Activated CD8-positive, alpha-beta T cell treated with anti-CD3 and anti-CD28 coated beads for 36 hours (primary cell): ENCODE measurements at regions of chr6 and their contacts with region 1.

Region 1: GRCh38 chr6:139364302-139364981 is 10.0 kb downstream of the CITED2 start:
- DNase-seq: no peak
- ATAC-seq: peak; percentile 65
- H3K4me3 Mint-ChIP-seq: no peak overlapping the region
- H3K27ac Mint-ChIP-seq: peak overlapping the region; percentile 48
- H3K4me1 Mint-ChIP-seq: peaks cover 26% of the 10 kb centered on the region
- H3K27me3 Mint-ChIP-seq: no peaks in the 10 kb centered on the region
- CTCF ChIP-seq: peak; percentile 79

Region 2: DNA sequence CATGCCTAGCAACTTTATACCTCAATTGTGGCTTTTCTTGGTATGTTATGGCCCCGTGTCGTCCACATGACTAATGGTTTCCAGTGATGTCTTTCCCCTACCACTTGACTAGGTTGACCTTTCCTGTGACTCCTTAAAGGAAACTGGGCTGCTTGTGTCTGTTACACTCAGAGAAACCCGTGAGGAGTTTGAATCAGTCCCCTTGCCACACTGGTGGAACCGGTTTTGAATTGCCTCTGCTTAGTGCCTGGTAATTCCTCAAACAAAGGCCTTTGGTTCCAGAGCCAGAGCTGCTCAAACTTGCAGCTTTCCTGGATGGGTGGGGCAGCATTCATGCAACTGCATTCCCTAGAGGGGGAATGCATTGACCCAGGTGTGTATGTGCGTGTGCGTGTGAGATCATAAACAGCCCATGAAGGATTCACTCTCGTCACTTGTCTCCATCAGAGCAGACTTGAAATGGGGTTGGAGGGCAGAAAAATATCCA is 546.6 kb before region 1 on chr6:
- CTCF ChIA-PET with region 1: interaction called, 21 read pairs
- POLR2A ChIA-PET with region 1: no interaction called
- intact Hi-C with region 1: loop called (anchors 1 kb)
- DNase-seq: peak; percentile 64
- ATAC-seq: peak; percentile 86
- H3K4me3 Mint-ChIP-seq: peak overlapping the region; percentile 20
- H3K27ac Mint-ChIP-seq: peak overlapping the region; percentile 83
- H3K4me1 Mint-ChIP-seq: peaks cover 29% of the 10 kb centered on the region
- H3K27me3 Mint-ChIP-seq: peaks cover 1% of the 10 kb centered on the region
- CTCF ChIP-seq: no peak

Region 3: GRCh38 chr6:139124887-139125672 is 239.4 kb before region 1 on chr6:
- CTCF ChIA-PET with region 1: interaction called, 26 read pairs
- POLR2A ChIA-PET with region 1: no interaction called
- intact Hi-C with region 1: loop called (anchors 1 kb)
- DNase-seq: peak; percentile 91
- ATAC-seq: peak; percentile 96
- H3K4me3 Mint-ChIP-seq: peak overlapping the region; percentile 53
- H3K27ac Mint-ChIP-seq: peak overlapping the region; percentile 96
- H3K4me1 Mint-ChIP-seq: peaks cover 49% of the 10 kb centered on the region
- H3K27me3 Mint-ChIP-seq: no peaks in the 10 kb centered on the region
- CTCF ChIP-seq: peak; percentile 66

Region 4: GRCh38 chr6:139134817-139135581 is 229.4 kb before region 1 on chr6 and contains the start of gene HECA:
- CTCF ChIA-PET with region 1: interaction called, 10 read pairs
- POLR2A ChIA-PET with region 1: no interaction called
- intact Hi-C with region 1: no loop called
- DNase-seq: peak; percentile 99
- ATAC-seq: peak; percentile 77
- H3K4me3 Mint-ChIP-seq: peak within 1 kb of the TSS; percentile 92
- H3K27ac Mint-ChIP-seq: peak within 1 kb of the TSS; percentile 92
- H3K4me1 Mint-ChIP-seq: peaks cover 59% of the 10 kb centered on the region
- H3K27me3 Mint-ChIP-seq: no peaks in the 10 kb centered on the region
- CTCF ChIP-seq: no peak
- total RNA-seq, gene HECA: 45.4 to 47.1 TPM

Region 5: GRCh38 chr6:139250296-139251044 is 114.0 kb before region 1 on chr6:
- CTCF ChIA-PET with region 1: interaction called, 12 read pairs
- POLR2A ChIA-PET with region 1: no interaction called
- intact Hi-C with region 1: no loop called
- DNase-seq: peak; percentile 69
- ATAC-seq: peak; percentile 96
- H3K4me3 Mint-ChIP-seq: no peak overlapping the region
- H3K27ac Mint-ChIP-seq: peak overlapping the region; percentile 77
- H3K4me1 Mint-ChIP-seq: peaks cover 48% of the 10 kb centered on the region
- H3K27me3 Mint-ChIP-seq: no peaks in the 10 kb centered on the region
- CTCF ChIP-seq: peak; percentile 71

Region 6: GRCh38 chr6:139291813-139292619 is 72.4 kb before region 1 on chr6 and contains the start of gene TXLNB:
- CTCF ChIA-PET with region 1: interaction called, 14 read pairs
- POLR2A ChIA-PET with region 1: no interaction called
- intact Hi-C with region 1: loop called (anchors 5 kb)
- DNase-seq: peak; percentile 92
- ATAC-seq: peak; percentile 92
- H3K4me3 Mint-ChIP-seq: peak within 1 kb of the TSS; percentile 76
- H3K27ac Mint-ChIP-seq: peak within 1 kb of the TSS; percentile 96
- H3K4me1 Mint-ChIP-seq: peaks cover 55% of the 10 kb centered on the region
- H3K27me3 Mint-ChIP-seq: no peaks in the 10 kb centered on the region
- CTCF ChIP-seq: no peak
- total RNA-seq, gene TXLNB: 0.11 to 0.22 TPM

Region 7: GRCh38 chr6:139330826-139331565 is 33.4 kb before region 1 on chr6:
- CTCF ChIA-PET with region 1: interaction called, 10 read pairs
- POLR2A ChIA-PET with region 1: no interaction called
- intact Hi-C with region 1: no loop called
- DNase-seq: no peak
- ATAC-seq: no peak
- H3K4me3 Mint-ChIP-seq: no peak overlapping the region
- H3K27ac Mint-ChIP-seq: no peak overlapping the region
- H3K4me1 Mint-ChIP-seq: peaks cover 15% of the 10 kb centered on the region
- H3K27me3 Mint-ChIP-seq: no peaks in the 10 kb centered on the region
- CTCF ChIP-seq: no peak